Breast epithelium (tissue), 4 donors: ENCODE measurements at regions of chr16 and their contacts with region 1.

Region 1: DNA sequence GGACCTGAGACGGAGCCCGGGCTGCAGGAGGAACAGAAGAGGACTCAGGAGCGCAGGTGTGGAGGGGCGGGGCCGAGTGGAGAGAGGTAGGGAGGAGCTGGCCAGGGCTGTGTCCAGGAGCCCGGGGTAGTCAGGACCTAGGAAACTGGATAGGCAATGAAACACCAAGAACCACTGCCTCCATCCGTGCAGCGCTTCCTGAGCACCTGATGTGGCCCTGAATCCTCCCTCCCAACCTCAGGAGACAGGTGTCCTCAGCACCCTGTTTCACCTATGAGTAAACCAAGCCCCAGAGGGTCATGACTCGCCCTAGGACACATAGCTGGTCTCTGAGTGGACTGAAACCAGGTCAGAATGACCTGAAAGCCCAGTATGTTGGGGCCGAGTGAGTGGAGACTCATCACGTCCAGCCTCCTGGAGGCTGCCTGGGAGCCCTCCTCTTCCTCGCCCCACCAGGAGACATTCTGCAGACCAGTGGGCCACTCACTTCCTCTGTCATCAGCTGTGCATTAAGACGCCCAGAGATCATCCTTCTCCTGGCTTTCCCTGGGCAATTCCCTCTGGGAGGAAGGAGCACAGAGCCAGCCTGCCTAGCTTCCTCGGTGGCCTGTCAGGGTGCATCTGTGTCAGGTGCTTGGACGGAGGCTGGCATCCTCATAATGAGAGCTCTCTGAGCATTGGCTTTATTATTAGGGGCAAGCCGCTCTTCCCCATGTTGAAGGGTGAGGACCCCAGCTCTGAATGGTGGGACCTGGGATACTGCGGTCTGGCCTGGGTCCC is 72.8 kb downstream of the SCNN1B start:
- DNase-seq: peak in 1 of 2 donors; percentile 58
- H3K4me3 ChIP-seq: no peak overlapping the region
- H3K27ac ChIP-seq: no peak overlapping the region
- H3K4me1 ChIP-seq: no peaks in the 10 kb centered on the region
- H3K27me3 ChIP-seq: no peaks in the 10 kb centered on the region
- CTCF ChIP-seq: no peak
- POLR2A ChIP-seq: no peak

Region 2: GRCh38 chr16:23064639-23065038 is 310.3 kb before region 1 on chr16:
- intact Hi-C with region 1: loop called (anchors 5 kb)
- DNase-seq: no peak
- H3K4me3 ChIP-seq: no peak overlapping the region
- H3K27ac ChIP-seq: no peak overlapping the region
- H3K4me1 ChIP-seq: no peaks in the 10 kb centered on the region
- H3K27me3 ChIP-seq: no peaks in the 10 kb centered on the region
- CTCF ChIP-seq: no peak
- POLR2A ChIP-seq: no peak

Region 3: GRCh38 chr16:23482778-23483177 is 107.9 kb after region 1 on chr16:
- intact Hi-C with region 1: no loop called
- DNase-seq: no peak
- H3K4me3 ChIP-seq: no peak overlapping the region
- H3K27ac ChIP-seq: no peak overlapping the region
- H3K4me1 ChIP-seq: no peaks in the 10 kb centered on the region
- H3K27me3 ChIP-seq: no peaks in the 10 kb centered on the region
- CTCF ChIP-seq: no peak
- POLR2A ChIP-seq: no peak